Activated CD8-positive, alpha-beta T cell treated with anti-CD3 and anti-CD28 coated beads, Interleukin-2, amount 10 ng/mL, durations not matched to agents 7 days and 5 days (primary cell): ENCODE measurements at regions of chr17 and their contacts with region 1.

Region 1: GRCh38 chr17:80254396-80255251 is 6.0 kb upstream of the RNF213 start:
- DNase-seq: peak; percentile 77
- ATAC-seq: peak; percentile 64
- H3K4me3 Mint-ChIP-seq: peak overlapping the region; percentile 43
- H3K27ac Mint-ChIP-seq: peak overlapping the region; percentile 85
- H3K4me1 Mint-ChIP-seq: peaks cover 52% of the 10 kb centered on the region
- H3K27me3 Mint-ChIP-seq: no peaks in the 10 kb centered on the region

Region 2: DNA sequence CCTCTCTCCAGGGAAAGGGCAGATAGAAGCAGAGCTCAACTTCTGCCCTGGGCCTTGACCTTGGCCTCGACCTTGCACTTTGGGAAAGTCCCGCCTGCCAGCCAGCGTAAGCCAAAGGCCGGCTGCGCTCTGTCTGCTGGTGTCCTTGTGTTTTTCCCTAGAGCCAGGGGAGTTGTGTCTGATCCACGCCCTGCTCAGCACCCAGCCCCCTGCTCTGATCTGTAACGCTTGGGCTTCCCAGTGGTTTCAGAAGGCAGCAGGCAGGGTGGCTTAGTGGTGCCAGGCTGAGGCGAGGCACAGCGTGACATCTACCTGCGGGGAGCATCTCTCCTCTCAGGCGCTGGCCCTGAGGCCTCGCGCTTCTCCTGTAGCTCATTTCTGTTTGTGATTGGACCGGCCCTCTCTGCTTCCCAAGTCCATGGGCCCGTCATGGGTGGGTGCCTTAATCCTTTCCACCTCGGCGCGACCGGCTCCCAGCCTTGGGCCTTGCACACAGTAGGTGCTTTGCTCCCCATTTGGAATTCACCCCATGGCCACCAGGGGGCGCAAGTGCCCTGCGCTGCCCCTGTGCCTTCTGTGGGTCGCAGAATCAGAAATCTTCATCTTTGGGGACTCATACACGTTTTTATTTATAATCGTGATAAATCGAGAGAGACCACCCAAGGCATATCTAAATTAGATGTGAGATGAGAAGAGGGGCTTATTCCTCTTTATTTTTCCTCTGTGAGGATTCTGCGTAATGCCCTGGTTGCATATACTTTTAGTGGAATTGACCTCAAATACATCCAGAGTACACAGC is 58.7 kb before region 1 on chr17:
- CTCF ChIA-PET with region 1: interaction called, 17 read pairs
- POLR2A ChIA-PET with region 1: no interaction called
- DNase-seq: peak; percentile 60
- ATAC-seq: no peak
- H3K4me3 Mint-ChIP-seq: no peak overlapping the region
- H3K27ac Mint-ChIP-seq: no peak overlapping the region
- H3K4me1 Mint-ChIP-seq: no peaks in the 10 kb centered on the region
- H3K27me3 Mint-ChIP-seq: peaks cover 11% of the 10 kb centered on the region